Activated naive CD4-positive, alpha-beta T cell treated with anti-CD3 and anti-CD28 coated beads for 36 hours (primary cell): ENCODE measurements at regions of chr9 and their contacts with region 1.

Region 1: GRCh38 chr9:89154651-89155336 is 23.8 kb downstream of the SHC3 start:
- DNase-seq: peak; percentile 67
- H3K4me3 Mint-ChIP-seq: no peak overlapping the region
- H3K27ac Mint-ChIP-seq: no peak overlapping the region
- H3K4me1 Mint-ChIP-seq: peaks cover 24% of the 10 kb centered on the region
- H3K27me3 Mint-ChIP-seq: peaks cover 37% of the 10 kb centered on the region

Region 2: DNA sequence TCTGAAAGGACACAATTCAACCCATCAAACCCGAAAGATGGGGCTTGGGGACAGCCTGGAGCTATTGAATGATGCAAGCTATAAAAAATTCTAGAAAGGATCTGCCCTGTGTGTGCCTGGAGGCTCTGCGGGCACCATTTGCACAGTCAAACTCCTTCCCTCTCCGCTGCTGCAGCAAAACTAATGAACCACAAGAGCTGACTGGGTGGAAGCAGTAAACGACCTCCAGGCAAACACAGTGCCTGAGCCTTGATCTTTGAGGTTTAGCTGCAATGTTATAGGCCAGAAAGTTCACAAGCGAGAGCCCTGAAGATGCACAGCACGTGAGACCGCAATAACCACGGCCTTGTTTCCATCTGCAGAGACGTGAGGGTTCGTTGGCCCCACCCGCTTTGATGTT is 232.8 kb before region 1 on chr9:
- CTCF ChIA-PET with region 1: no interaction called
- intact Hi-C with region 1: loop called (anchors 10 kb)
- DNase-seq: peak; percentile 71
- H3K4me3 Mint-ChIP-seq: no peak overlapping the region
- H3K27ac Mint-ChIP-seq: no peak overlapping the region
- H3K4me1 Mint-ChIP-seq: peaks cover 44% of the 10 kb centered on the region
- H3K27me3 Mint-ChIP-seq: peaks cover 3% of the 10 kb centered on the region

Region 3: GRCh38 chr9:89179895-89180667 is 25.3 kb after region 1 on chr9:
- CTCF ChIA-PET with region 1: no interaction called
- intact Hi-C with region 1: loop called (anchors 1 kb)
- DNase-seq: peak; percentile 88
- H3K4me3 Mint-ChIP-seq: peak overlapping the region; percentile 50
- H3K27ac Mint-ChIP-seq: peak overlapping the region; percentile 1
- H3K4me1 Mint-ChIP-seq: peaks cover 23% of the 10 kb centered on the region
- H3K27me3 Mint-ChIP-seq: peaks cover 50% of the 10 kb centered on the region

Region 4: DNA sequence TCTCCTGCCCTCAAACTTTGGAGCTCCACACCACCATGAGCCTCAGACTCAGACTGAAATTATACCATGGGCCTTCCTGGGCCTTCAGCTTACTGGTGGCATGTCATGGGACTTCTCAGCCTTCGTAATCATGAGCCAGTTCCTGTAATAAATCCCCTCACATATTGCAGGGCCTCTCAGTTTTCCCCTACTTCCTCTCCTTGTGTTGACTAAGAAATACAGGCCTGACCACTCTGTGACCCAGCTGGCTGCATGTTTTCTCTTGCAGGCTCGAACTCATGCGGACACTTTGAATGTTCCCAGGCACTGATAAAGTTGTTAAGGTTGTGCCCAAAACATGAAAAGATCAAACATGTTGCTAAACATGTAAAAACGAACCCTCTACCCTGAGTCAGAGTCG is 50.0 kb after region 1 on chr9:
- CTCF ChIA-PET with region 1: no interaction called
- intact Hi-C with region 1: no loop called
- DNase-seq: no peak
- H3K4me3 Mint-ChIP-seq: no peak overlapping the region
- H3K27ac Mint-ChIP-seq: no peak overlapping the region
- H3K4me1 Mint-ChIP-seq: no peaks in the 10 kb centered on the region
- H3K27me3 Mint-ChIP-seq: no peaks in the 10 kb centered on the region

Region 5: GRCh38 chr9:89278997-89279739 is 124.4 kb after region 1 on chr9:
- CTCF ChIA-PET with region 1: no interaction called
- intact Hi-C with region 1: loop called (anchors 1 kb)
- DNase-seq: peak; percentile 38
- H3K4me3 Mint-ChIP-seq: no peak overlapping the region
- H3K27ac Mint-ChIP-seq: no peak overlapping the region
- H3K4me1 Mint-ChIP-seq: peaks cover 41% of the 10 kb centered on the region
- H3K27me3 Mint-ChIP-seq: peaks cover 1% of the 10 kb centered on the region

Region 6: DNA sequence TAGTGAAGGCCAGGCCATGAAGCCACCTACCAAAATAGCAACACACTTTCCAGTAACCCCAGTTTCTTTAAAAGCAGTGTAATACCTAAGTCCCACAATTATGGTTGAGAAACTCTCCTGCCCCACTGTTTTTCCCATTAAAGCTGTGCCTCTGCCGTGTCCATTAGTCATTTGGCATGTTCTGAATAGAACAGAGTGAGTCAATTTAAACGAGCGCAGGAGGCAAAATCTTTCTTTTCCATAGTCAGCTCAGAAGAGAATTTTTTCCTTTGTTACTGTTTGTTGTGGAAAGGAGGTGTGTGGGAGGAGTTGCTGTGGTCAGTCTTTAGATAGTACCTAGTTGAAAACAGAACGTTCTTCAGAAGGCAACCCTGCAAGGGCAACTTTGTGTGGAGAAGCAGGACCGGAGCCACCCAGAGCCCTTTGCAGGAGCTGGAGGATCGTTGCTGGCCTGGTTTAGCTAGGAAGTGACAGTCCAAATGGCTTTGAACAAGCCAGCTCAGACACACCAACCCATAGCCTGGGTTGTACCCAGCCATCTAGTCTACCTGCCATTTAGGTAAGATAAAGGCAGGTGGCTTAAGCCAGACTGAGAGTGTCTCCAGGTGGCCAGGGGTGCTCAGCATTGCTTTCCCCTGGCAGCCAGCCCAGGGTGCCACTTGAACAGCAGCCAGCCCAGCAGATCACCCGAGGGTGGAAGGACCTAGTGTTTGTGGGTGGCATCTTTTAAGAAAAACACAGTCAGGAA is 480.4 kb after region 1 on chr9:
- CTCF ChIA-PET with region 1: no interaction called
- intact Hi-C with region 1: no loop called
- DNase-seq: no peak
- H3K4me3 Mint-ChIP-seq: no peak overlapping the region
- H3K27ac Mint-ChIP-seq: no peak overlapping the region
- H3K4me1 Mint-ChIP-seq: no peaks in the 10 kb centered on the region
- H3K27me3 Mint-ChIP-seq: no peaks in the 10 kb centered on the region